Lower leg skin (tissue), 4 donors: ENCODE measurements at regions of chr14 and their contacts with region 1.

Region 1: GRCh38 chr14:26444822-26445221 is 153.0 kb downstream of the NOVA1 start:
- DNase-seq: no peak
- H3K4me3 ChIP-seq: no peak overlapping the region
- CTCF ChIP-seq: no peak
- POLR2A ChIP-seq: no peak

Region 2: DNA sequence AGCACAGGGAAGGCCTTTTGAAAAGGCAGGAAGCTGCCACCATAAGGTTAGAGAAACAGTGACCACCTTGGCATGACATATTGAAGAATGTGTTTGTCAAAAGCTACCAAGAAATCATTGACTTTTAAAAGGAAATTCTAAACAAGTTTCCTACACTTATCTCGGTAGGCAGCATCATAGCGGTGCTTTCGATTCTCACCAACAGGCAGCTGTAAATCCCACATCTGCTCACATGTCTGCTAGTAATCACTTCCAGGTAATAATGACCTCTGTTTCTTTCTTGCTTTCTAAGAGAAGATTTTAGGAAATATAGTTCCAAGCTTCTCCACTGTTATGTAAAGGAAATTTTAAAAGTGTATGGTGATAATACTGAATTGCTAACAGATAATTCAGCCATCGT is 1500.7 kb after region 1 on chr14:
- intact Hi-C with region 1: no loop called
- DNase-seq: no peak
- H3K4me3 ChIP-seq: no peak overlapping the region
- CTCF ChIP-seq: no peak
- POLR2A ChIP-seq: no peak

Region 3: GRCh38 chr14:28163233-28163632 is 1718.4 kb after region 1 on chr14:
- intact Hi-C with region 1: loop called (anchors 5 kb)
- DNase-seq: no peak
- H3K4me3 ChIP-seq: no peak overlapping the region
- CTCF ChIP-seq: no peak
- POLR2A ChIP-seq: no peak